Heart left ventricle (tissue), 16 donors: ENCODE measurements at regions of chr15 and their contacts with region 1.

Region 1: GRCh38 chr15:82985688-82986441 is at the start of gene RAMAC:
- DNase-seq: peak; percentile 91 to 96 (median 93)
- ATAC-seq: peak; percentile 89 to 98 (median 98)
- H3K4me3 ChIP-seq: peak within 1 kb of the TSS; percentile 53 to 98 (median 79)
- H3K27ac ChIP-seq: peak within 1 kb of the TSS; percentile 21 to 87 (median 78)
- H3K4me1 ChIP-seq: peaks cover 0 to 20% (median 15%) of the 10 kb centered on the region in 12 donors
- H3K27me3 ChIP-seq: no peaks in the 10 kb centered on the region
- CTCF ChIP-seq: no peak
- POLR2A ChIP-seq: peak in 1 of 2 donors; percentile 49
- total RNA-seq, gene RAMAC: 11.0 to 17.0 (median 14.9) TPM

Region 2: GRCh38 chr15:82855286-82856100 is 130.4 kb before region 1 on chr15:
- intact Hi-C with region 1: loop called in 7 of 10 experiments (anchors 5 to 10 kb)
- DNase-seq: no peak
- ATAC-seq: peak in 2 of 4 donors; percentile 26 to 71
- H3K4me3 ChIP-seq: no peak overlapping the region
- H3K27ac ChIP-seq: peak overlapping the region in 9 of 12 donors; percentile 13 to 63 (median 44)
- H3K4me1 ChIP-seq: peaks cover 0 to 10% (median 0%) of the 10 kb centered on the region in 12 donors
- H3K27me3 ChIP-seq: no peaks in the 10 kb centered on the region
- CTCF ChIP-seq: no peak
- POLR2A ChIP-seq: no peak